Left colon (tissue), 2 donors: ENCODE measurements at regions of chr20 and their contacts with region 1.

Region 1: GRCh38 chr20:45436732-45437391 is 20.9 kb downstream of the PIGT start:
- DNase-seq: peak; percentile 87 to 93
- ATAC-seq: peak; percentile 97

Region 2: GRCh38 chr20:45322952-45323383 is 113.9 kb before region 1 on chr20:
- intact Hi-C with region 1: loop called in 1 of 2 experiments (anchors 10 kb)
- DNase-seq: peak; percentile 56 to 70
- ATAC-seq: peak; percentile 66

Region 3: GRCh38 chr20:45373353-45374100 is 63.3 kb before region 1 on chr20:
- intact Hi-C with region 1: loop called in 1 of 2 experiments (anchors 2 kb)
- DNase-seq: peak; percentile 92 to 95
- ATAC-seq: peak; percentile 83

Region 4: GRCh38 chr20:45611054-45611453 is 174.2 kb after region 1 on chr20:
- intact Hi-C with region 1: no loop called
- DNase-seq: no peak
- ATAC-seq: no peak

Region 5: GRCh38 chr20:45771182-45771759 is 334.4 kb after region 1 on chr20:
- intact Hi-C with region 1: loop called in 1 of 2 experiments (anchors 10 kb)
- DNase-seq: peak; percentile 69 to 87
- ATAC-seq: peak; percentile 69